CD4-positive, alpha-beta T cell (primary cell): ENCODE measurements at regions of chr15 and their contacts with region 1.

Region 1: DNA sequence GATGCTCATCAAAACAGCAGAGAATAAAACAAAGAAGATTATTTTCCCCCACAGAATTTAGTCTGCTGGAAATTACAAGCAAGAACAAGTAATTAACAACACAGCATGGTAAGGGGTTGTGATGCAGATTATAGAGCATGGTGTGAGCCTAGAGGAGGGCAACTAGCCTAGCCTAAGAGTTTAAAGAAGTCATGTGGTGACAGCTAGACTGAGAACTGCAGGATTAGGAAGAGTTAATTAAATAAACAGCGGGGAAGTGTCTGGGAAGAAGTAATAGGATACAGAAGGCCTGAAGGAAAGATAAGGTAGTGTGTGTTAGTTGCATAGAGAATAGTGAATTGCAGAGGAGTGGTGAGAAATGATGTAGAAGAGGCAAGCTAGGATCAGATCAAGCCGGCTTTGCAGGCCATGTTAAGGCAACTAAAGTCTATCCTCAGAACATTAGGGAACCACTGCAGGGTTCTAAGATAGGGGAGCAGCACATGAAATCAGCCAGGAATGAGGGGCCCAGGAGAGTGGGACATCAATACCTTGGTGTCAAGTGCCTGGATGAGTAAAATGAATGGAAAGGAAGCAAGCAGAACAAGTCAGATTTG is 11.9 kb upstream of the PKM start:
- DNase-seq: no peak
- ATAC-seq: no peak
- H3K4me3 ChIP-seq: no peak overlapping the region
- H3K4me3 Mint-ChIP-seq: no peak overlapping the region
- H3K27ac ChIP-seq: no peak overlapping the region
- H3K27ac Mint-ChIP-seq: peak overlapping the region; percentile 14
- H3K4me1 ChIP-seq: no peaks in the 10 kb centered on the region
- H3K4me1 Mint-ChIP-seq: no peaks in the 10 kb centered on the region
- H3K27me3 ChIP-seq: no peaks in the 10 kb centered on the region
- H3K27me3 Mint-ChIP-seq: no peaks in the 10 kb centered on the region
- CTCF ChIP-seq: no peak

Region 2: GRCh38 chr15:72265031-72265430 is 22.2 kb after region 1 on chr15:
- CTCF ChIA-PET with region 1: no interaction called
- POLR2A ChIA-PET with region 1: no interaction called
- intact Hi-C with region 1: loop called in 1 of 2 experiments (anchors 2 kb)
- DNase-seq: no peak
- ATAC-seq: no peak
- H3K4me3 ChIP-seq: no peak overlapping the region
- H3K4me3 Mint-ChIP-seq: no peak overlapping the region
- H3K27ac ChIP-seq: no peak overlapping the region
- H3K27ac Mint-ChIP-seq: peak overlapping the region; percentile 29
- H3K4me1 ChIP-seq: no peaks in the 10 kb centered on the region
- H3K4me1 Mint-ChIP-seq: peaks cover 2% of the 10 kb centered on the region
- H3K27me3 ChIP-seq: no peaks in the 10 kb centered on the region
- H3K27me3 Mint-ChIP-seq: no peaks in the 10 kb centered on the region
- CTCF ChIP-seq: no peak

Region 3: GRCh38 chr15:72700076-72700475 is 457.2 kb after region 1 on chr15:
- CTCF ChIA-PET with region 1: no interaction called
- POLR2A ChIA-PET with region 1: no interaction called
- intact Hi-C with region 1: no loop called
- DNase-seq: no peak
- ATAC-seq: no peak
- H3K4me3 ChIP-seq: no peak overlapping the region
- H3K4me3 Mint-ChIP-seq: no peak overlapping the region
- H3K27ac ChIP-seq: no peak overlapping the region
- H3K27ac Mint-ChIP-seq: no peak overlapping the region
- H3K4me1 ChIP-seq: no peaks in the 10 kb centered on the region
- H3K4me1 Mint-ChIP-seq: peaks cover 5% of the 10 kb centered on the region
- H3K27me3 ChIP-seq: no peaks in the 10 kb centered on the region
- H3K27me3 Mint-ChIP-seq: no peaks in the 10 kb centered on the region
- CTCF ChIP-seq: no peak